ENCODE measurements at regions of chr17 and their contacts with region 1.

Region 1: GRCh38 chr17:74415608-74416396 is 16.1 kb upstream of the GPRC5C start:
- DNase-seq: no peak
- H3K4me3 Mint-ChIP-seq: no peak overlapping the region
- H3K27ac Mint-ChIP-seq: no peak overlapping the region
- H3K4me1 Mint-ChIP-seq: no peaks in the 10 kb centered on the region
- H3K27me3 Mint-ChIP-seq: peaks cover 2% of the 10 kb centered on the region

Region 2: GRCh38 chr17:74354123-74354522 is 61.7 kb before region 1 on chr17:
- intact Hi-C with region 1: no loop called
- DNase-seq: peak; percentile 39
- H3K4me3 Mint-ChIP-seq: no peak overlapping the region
- H3K27ac Mint-ChIP-seq: no peak overlapping the region
- H3K4me1 Mint-ChIP-seq: peaks cover 4% of the 10 kb centered on the region
- H3K27me3 Mint-ChIP-seq: peaks cover 45% of the 10 kb centered on the region

Region 3: GRCh38 chr17:74393346-74393942 is 22.4 kb before region 1 on chr17:
- intact Hi-C with region 1: loop called (anchors 1 kb)
- DNase-seq: no peak
- H3K4me3 Mint-ChIP-seq: no peak overlapping the region
- H3K27ac Mint-ChIP-seq: no peak overlapping the region
- H3K4me1 Mint-ChIP-seq: no peaks in the 10 kb centered on the region
- H3K27me3 Mint-ChIP-seq: peaks cover 9% of the 10 kb centered on the region

Measured in activated T-helper 1 cell treated with anti-CD3 and anti-CD28 coated beads, Interleukin-12 subunit alpha, Interleukin-12 subunit beta, Interleukin-2, Interleukin-4 antibody, amounts not matched to agents 30 ng/mL and 10 ng/mL and 1 ng/mL, durations not matched to agents 14 hours and 24 hours and 36 hours (primary cell).